ENCODE measurements at regions of chrX and their contacts with region 1.

Region 1: DNA sequence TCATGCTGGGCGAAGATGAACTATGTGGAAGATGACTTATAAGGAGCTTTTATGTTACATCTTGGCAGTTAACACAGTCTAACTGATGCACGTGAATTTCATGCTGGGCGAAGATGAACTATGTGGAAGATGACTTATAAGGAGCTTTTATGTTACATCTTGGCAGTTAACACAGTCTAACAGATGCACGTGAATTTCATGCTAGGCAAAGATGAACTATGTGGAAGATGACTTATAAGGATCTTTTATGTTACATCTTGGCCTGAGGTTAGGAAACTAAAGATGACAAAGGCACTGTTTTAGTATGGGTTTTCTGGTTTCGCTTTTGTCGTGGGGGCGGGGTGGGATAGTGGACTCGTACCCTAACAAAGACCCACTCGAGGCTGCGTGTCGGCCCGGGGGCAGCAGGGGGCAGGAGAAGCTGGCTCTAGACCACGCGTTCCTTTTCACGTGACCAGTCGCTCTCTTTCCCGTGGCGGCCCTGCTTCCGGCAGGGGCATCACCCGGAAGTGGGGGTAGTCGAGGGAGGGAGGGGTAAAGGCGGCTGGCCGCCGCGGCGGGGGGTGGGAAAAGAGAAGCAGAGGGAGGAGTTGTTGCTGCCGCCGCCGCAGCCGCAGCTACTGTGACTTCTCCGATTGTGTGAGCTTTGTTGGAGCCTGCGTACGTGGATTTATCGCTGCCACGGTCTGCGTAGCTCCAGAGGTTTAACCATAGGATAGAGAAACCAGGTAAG is at the start of gene ATP7A:
- DNase-seq: peak; percentile 95
- H3K4me3 Mint-ChIP-seq: peak within 1 kb of the TSS; percentile 99
- H3K27ac Mint-ChIP-seq: peak within 1 kb of the TSS; percentile 99
- H3K4me1 Mint-ChIP-seq: peaks cover 19% of the 10 kb centered on the region
- H3K27me3 Mint-ChIP-seq: no peaks in the 10 kb centered on the region
- total RNA-seq, gene ATP7A: 8.0 TPM

Region 2: DNA sequence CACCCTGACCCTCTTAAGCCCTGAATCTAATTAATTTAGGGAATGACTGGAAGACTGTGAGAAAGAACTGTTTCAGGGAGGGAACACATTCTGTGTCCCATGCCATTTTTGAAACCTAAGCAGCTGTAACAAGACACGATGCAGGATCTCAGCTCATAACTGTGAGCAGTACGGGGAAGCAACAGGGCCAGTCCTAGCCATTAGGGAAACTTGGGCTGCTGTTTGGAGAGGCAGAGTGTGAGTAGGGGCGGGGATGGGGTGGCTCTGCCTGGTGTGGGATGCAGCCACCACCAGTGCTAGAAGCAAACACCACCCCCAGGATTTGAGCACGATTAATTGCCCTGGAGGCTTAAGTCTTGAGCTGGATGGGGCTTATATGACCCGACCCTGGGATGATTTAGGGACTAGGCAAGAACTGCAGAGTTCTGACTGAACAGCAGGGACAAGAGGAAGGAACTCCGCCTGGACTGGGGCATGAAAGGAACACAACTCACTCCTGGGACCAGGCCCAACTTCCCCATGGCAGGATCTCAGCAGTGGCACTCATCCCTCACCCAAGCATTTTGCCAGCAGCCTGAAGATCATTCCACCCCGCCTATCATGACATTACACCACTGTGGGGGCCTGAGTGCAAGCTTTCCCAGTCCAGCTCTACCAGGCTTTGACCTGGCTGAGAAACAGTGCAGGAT is 167.3 kb before region 1 on chrX:
- CTCF ChIA-PET with region 1: no interaction called
- POLR2A ChIA-PET with region 1: no interaction called
- intact Hi-C with region 1: no loop called
- DNase-seq: no peak
- H3K4me3 Mint-ChIP-seq: no peak overlapping the region
- H3K27ac Mint-ChIP-seq: no peak overlapping the region
- H3K4me1 Mint-ChIP-seq: peaks cover 50% of the 10 kb centered on the region
- H3K27me3 Mint-ChIP-seq: no peaks in the 10 kb centered on the region

Region 3: GRCh38 chrX:77875372-77875771 is 34.9 kb before region 1 on chrX:
- CTCF ChIA-PET with region 1: no interaction called
- POLR2A ChIA-PET with region 1: no interaction called
- intact Hi-C with region 1: no loop called
- DNase-seq: no peak
- H3K4me3 Mint-ChIP-seq: no peak overlapping the region
- H3K27ac Mint-ChIP-seq: no peak overlapping the region
- H3K4me1 Mint-ChIP-seq: peaks cover 2% of the 10 kb centered on the region
- H3K27me3 Mint-ChIP-seq: no peaks in the 10 kb centered on the region

Region 4: DNA sequence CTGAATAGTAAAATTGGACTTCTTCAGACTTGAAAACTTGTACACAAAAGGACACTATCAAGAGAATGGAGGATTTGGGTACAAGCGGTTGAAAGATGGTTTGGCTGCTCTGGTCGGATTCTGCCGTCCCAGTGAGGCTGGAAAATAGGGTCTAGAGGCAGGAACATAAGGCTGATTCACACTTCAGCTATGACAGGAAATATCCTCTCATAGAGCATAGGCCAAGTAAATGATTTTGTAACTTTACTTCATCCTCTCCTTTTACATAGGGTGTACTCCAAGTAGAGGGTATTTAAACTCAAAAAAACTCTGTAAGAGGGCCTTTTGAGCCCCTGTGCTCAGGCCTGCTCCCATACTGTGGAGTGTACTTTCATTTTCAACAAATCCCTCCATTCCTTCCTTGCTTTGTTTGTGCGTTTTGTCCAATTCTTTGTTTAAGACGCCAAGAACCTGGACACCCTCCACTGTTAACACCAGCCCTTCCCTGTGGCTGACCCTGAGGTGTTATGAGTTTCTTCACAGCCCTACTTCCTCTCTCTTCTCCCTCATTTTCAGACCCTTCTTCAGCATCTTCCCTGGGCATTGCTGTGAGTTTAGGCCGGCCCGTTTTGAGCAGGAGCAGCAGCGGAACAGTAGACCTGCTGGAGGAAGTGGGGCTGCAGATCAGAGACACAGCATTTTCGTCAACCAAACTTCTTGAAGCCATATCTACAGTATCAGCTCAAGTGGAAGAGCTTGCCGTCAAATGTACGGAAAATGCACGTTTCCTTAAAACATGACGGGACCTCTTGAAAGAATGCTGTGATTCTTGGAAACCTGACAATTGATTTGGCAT is 52.0 kb after region 1 on chrX:
- CTCF ChIA-PET with region 1: no interaction called
- POLR2A ChIA-PET with region 1: no interaction called
- intact Hi-C with region 1: loop called (anchors 2 kb)
- DNase-seq: peak; percentile 14
- H3K4me3 Mint-ChIP-seq: peak overlapping the region; percentile 71
- H3K27ac Mint-ChIP-seq: peak overlapping the region; percentile 96
- H3K4me1 Mint-ChIP-seq: peaks cover 43% of the 10 kb centered on the region
- H3K27me3 Mint-ChIP-seq: no peaks in the 10 kb centered on the region

Region 5: GRCh38 chrX:78024349-78025108 is 114.3 kb after region 1 on chrX:
- CTCF ChIA-PET with region 1: interaction called, 27 read pairs
- POLR2A ChIA-PET with region 1: no interaction called
- intact Hi-C with region 1: loop called (anchors 1 kb)
- DNase-seq: peak; percentile 10
- H3K4me3 Mint-ChIP-seq: no peak overlapping the region
- H3K27ac Mint-ChIP-seq: no peak overlapping the region
- H3K4me1 Mint-ChIP-seq: no peaks in the 10 kb centered on the region
- H3K27me3 Mint-ChIP-seq: no peaks in the 10 kb centered on the region

Region 6: DNA sequence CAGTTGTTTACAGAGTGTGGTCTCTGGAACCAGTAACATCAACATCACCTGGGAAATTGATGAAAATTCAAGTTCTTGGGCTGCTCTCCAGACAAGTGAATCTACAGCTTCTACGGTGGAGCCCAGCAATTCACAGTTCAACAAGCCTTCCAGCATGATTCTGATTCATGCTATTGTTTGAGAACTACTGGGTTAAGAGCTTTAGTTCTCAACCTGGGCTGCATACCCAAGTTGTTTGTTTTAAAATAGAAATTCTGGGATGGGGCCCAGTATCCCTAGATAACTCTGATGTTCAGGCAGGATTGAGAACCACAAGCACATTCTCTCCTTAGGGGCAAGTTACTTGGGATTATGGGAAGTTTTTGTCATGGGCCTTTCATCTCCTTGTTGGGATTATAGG is 155.8 kb after region 1 on chrX:
- CTCF ChIA-PET with region 1: no interaction called
- POLR2A ChIA-PET with region 1: no interaction called
- intact Hi-C with region 1: loop called (anchors 1 kb)
- DNase-seq: no peak
- H3K4me3 Mint-ChIP-seq: no peak overlapping the region
- H3K27ac Mint-ChIP-seq: no peak overlapping the region
- H3K4me1 Mint-ChIP-seq: peaks cover 13% of the 10 kb centered on the region
- H3K27me3 Mint-ChIP-seq: no peaks in the 10 kb centered on the region

Region 7: GRCh38 chrX:78321809-78322208 is 411.5 kb after region 1 on chrX:
- CTCF ChIA-PET with region 1: no interaction called
- POLR2A ChIA-PET with region 1: no interaction called
- intact Hi-C with region 1: loop called (anchors 2 kb)
- DNase-seq: peak; percentile 64
- H3K4me3 Mint-ChIP-seq: peak overlapping the region; percentile 45
- H3K27ac Mint-ChIP-seq: peak overlapping the region; percentile 81
- H3K4me1 Mint-ChIP-seq: peaks cover 32% of the 10 kb centered on the region
- H3K27me3 Mint-ChIP-seq: no peaks in the 10 kb centered on the region

Measured in activated CD4-positive, alpha-beta memory T cell treated with anti-CD3 and anti-CD28 coated beads for 36 hours (primary cell).